ENCODE measurements at regions of chr1 and their contacts with region 1.

Region 1: GRCh38 chr1:159817276-159818041 is 9.2 kb upstream of the SLAMF8 start:
- DNase-seq: peak; percentile 98
- ATAC-seq: peak; percentile 98
- H3K4me3 ChIP-seq: no peak overlapping the region
- H3K27ac ChIP-seq: peak overlapping the region; percentile 74
- H3K4me1 ChIP-seq: peaks cover 15% of the 10 kb centered on the region
- H3K27me3 ChIP-seq: no peaks in the 10 kb centered on the region
- CTCF ChIP-seq: no peak

Region 2: GRCh38 chr1:159646687-159647086 is 170.8 kb before region 1 on chr1:
- CTCF ChIA-PET with region 1: no interaction called
- POLR2A ChIA-PET with region 1: no interaction called
- intact Hi-C with region 1: no loop called
- DNase-seq: no peak
- ATAC-seq: no peak
- H3K4me3 ChIP-seq: no peak overlapping the region
- H3K27ac ChIP-seq: no peak overlapping the region
- H3K4me1 ChIP-seq: no peaks in the 10 kb centered on the region
- H3K27me3 ChIP-seq: peaks cover 22% of the 10 kb centered on the region
- CTCF ChIP-seq: no peak

Region 3: DNA sequence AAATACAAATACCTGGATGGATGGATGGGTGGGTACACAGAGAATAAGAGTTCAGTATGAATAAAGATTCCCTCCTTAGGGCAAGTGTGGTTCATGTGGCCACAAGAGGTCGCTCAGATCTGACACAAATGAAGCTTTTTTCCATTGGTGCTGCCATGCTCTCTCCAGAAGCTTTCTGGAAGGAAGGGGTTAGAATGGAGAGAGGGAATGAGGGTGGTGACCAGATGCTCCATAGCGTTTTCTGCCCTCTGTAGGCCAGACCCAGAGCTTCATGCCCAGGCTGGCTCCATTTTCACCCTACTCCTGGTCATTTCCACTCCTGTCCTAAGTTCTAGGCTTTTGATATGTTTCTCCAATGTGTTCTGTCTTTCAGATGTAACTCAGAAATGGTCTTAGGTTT is 18.6 kb before region 1 on chr1:
- CTCF ChIA-PET with region 1: interaction called, 4 read pairs
- POLR2A ChIA-PET with region 1: no interaction called
- intact Hi-C with region 1: loop called (anchors 2 kb)
- DNase-seq: peak; percentile 92
- ATAC-seq: peak; percentile 94
- H3K4me3 ChIP-seq: no peak overlapping the region
- H3K27ac ChIP-seq: no peak overlapping the region
- H3K4me1 ChIP-seq: peaks cover 3% of the 10 kb centered on the region; the same call in 1 of the 2 replicates
- H3K27me3 ChIP-seq: peaks cover 33% of the 10 kb centered on the region
- CTCF ChIP-seq: peak; percentile 98

Region 4: GRCh38 chr1:159854693-159855192 is 37.3 kb after region 1 on chr1:
- CTCF ChIA-PET with region 1: no interaction called
- POLR2A ChIA-PET with region 1: no interaction called
- intact Hi-C with region 1: loop called (anchors 1 kb)
- DNase-seq: peak; percentile 85
- ATAC-seq: peak; percentile 83
- H3K4me3 ChIP-seq: peak overlapping the region; percentile 84
- H3K27ac ChIP-seq: peak overlapping the region; percentile 73
- H3K4me1 ChIP-seq: peaks cover 25% of the 10 kb centered on the region
- H3K27me3 ChIP-seq: no peaks in the 10 kb centered on the region
- CTCF ChIP-seq: no peak

Region 5: DNA sequence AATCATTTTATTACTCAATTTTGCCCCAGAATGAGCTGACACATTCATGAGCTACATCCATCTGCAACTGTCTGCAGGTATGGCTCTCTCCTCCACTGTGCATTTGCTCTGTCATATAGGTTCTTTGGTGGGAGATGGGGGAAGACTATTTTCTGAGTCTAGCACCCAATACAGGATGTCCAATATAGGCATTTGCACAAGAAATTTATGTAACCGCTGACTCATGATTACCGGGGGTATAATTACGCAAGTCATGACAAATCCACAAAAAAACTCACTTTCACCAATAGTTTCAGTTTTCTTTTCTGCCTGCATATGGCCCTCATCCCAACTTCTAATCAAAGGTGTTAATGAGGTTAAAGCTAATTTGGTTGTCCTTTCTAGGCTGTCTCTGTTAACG is 62.5 kb after region 1 on chr1:
- CTCF ChIA-PET with region 1: no interaction called
- POLR2A ChIA-PET with region 1: no interaction called
- intact Hi-C with region 1: loop called (anchors 1 kb)
- DNase-seq: peak; percentile 91
- ATAC-seq: peak; percentile 42
- H3K4me3 ChIP-seq: no peak overlapping the region
- H3K27ac ChIP-seq: peak overlapping the region; percentile 97
- H3K4me1 ChIP-seq: peaks cover 54% of the 10 kb centered on the region
- H3K27me3 ChIP-seq: no peaks in the 10 kb centered on the region
- CTCF ChIP-seq: no peak

Measured in PC-3 (cell line).